B cell (primary cell): ENCODE measurements at regions of chr1 and their contacts with region 1.

Region 1: DNA sequence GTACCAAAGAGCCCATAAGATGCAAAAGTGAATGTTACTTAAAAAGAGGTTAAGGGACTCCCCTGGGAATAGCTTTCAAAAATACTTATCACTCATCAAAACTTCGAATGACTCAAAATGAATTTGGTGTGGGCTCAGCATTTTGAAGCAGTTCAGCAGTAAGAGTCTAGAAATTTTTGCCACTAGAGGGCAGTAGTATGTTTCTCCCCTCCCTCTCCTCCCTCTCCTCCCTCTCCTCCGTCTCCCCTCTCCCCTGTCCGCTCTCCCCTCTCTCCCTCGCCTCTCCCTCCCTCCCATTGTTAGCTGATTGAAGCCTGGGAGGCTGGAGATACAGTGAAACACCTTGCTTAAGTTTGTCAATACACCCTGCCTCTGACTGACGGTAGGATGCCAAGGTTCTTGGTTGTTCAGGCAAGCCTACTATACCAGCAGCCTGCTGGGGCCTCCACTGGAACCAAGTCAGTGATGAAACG is 70.8 kb upstream of the TENT5C start:
- DNase-seq: peak; percentile 84
- ATAC-seq: peak; percentile 85
- H3K4me3 ChIP-seq: no peak overlapping the region
- H3K4me3 Mint-ChIP-seq: peak overlapping the region; percentile 27
- H3K27ac ChIP-seq: no peak overlapping the region
- H3K27ac Mint-ChIP-seq: peak overlapping the region; percentile 54
- H3K4me1 ChIP-seq: peaks cover 28 to 36% of the 10 kb centered on the region in 2 donors
- H3K4me1 Mint-ChIP-seq: peaks cover 2% of the 10 kb centered on the region
- H3K27me3 ChIP-seq: no peaks in the 10 kb centered on the region
- H3K27me3 Mint-ChIP-seq: no peaks in the 10 kb centered on the region
- CTCF ChIP-seq: peak; percentile 77

Region 2: DNA sequence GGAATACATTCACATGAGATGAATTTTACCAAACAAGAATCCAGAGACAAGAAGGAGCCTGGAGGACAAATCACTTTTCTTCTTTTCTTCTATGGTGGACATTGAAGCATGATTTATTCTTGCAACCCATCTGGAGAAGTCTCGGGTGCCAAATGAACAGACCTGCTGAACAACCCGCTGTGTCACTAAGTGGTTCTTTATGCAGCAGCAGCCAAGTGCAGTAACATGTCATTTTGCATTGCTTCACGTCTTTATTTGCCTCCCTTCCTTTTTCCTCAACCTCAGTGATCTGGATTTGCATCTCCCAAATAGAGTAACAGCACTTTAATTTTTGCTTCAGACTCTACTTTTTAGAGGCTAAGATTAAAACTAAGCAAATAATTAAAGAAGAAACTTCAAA is 20.8 kb after region 1 on chr1:
- CTCF ChIA-PET with region 1: interaction called, 12 read pairs
- POLR2A ChIA-PET with region 1: no interaction called
- intact Hi-C with region 1: no loop called
- DNase-seq: no peak
- ATAC-seq: no peak
- H3K4me3 ChIP-seq: no peak overlapping the region
- H3K4me3 Mint-ChIP-seq: no peak overlapping the region
- H3K27ac ChIP-seq: no peak overlapping the region
- H3K27ac Mint-ChIP-seq: no peak overlapping the region
- H3K4me1 ChIP-seq: peaks cover 0 to 3% of the 10 kb centered on the region in 2 donors
- H3K4me1 Mint-ChIP-seq: peaks cover 6% of the 10 kb centered on the region
- H3K27me3 ChIP-seq: no peaks in the 10 kb centered on the region
- H3K27me3 Mint-ChIP-seq: no peaks in the 10 kb centered on the region
- CTCF ChIP-seq: no peak

Region 3: GRCh38 chr1:117594261-117594990 is 59.4 kb after region 1 on chr1:
- CTCF ChIA-PET with region 1: interaction called, 18 read pairs
- POLR2A ChIA-PET with region 1: no interaction called
- intact Hi-C with region 1: no loop called
- DNase-seq: no peak
- ATAC-seq: no peak
- H3K4me3 ChIP-seq: no peak overlapping the region
- H3K4me3 Mint-ChIP-seq: no peak overlapping the region
- H3K27ac ChIP-seq: no peak overlapping the region
- H3K27ac Mint-ChIP-seq: peak overlapping the region; percentile 46
- H3K4me1 ChIP-seq: peaks cover 16 to 26% of the 10 kb centered on the region in 2 donors
- H3K4me1 Mint-ChIP-seq: peaks cover 22% of the 10 kb centered on the region
- H3K27me3 ChIP-seq: no peaks in the 10 kb centered on the region
- H3K27me3 Mint-ChIP-seq: peaks cover 6% of the 10 kb centered on the region
- CTCF ChIP-seq: no peak

Region 4: GRCh38 chr1:117612517-117613248 is 77.7 kb after region 1 on chr1:
- CTCF ChIA-PET with region 1: interaction called, 38 read pairs
- POLR2A ChIA-PET with region 1: no interaction called
- intact Hi-C with region 1: no loop called
- DNase-seq: peak; percentile 56
- ATAC-seq: peak; percentile 31
- H3K4me3 ChIP-seq: peak overlapping the region in 1 of 5 experiments; percentile 23
- H3K4me3 Mint-ChIP-seq: peak overlapping the region; percentile 84
- H3K27ac ChIP-seq: peak overlapping the region; percentile 0 to 52
- H3K27ac Mint-ChIP-seq: peak overlapping the region; percentile 84
- H3K4me1 ChIP-seq: peaks cover 93 to 100% of the 10 kb centered on the region in 2 donors
- H3K4me1 Mint-ChIP-seq: peaks cover 95% of the 10 kb centered on the region
- H3K27me3 ChIP-seq: no peaks in the 10 kb centered on the region
- H3K27me3 Mint-ChIP-seq: no peaks in the 10 kb centered on the region
- CTCF ChIP-seq: no peak

Region 5: DNA sequence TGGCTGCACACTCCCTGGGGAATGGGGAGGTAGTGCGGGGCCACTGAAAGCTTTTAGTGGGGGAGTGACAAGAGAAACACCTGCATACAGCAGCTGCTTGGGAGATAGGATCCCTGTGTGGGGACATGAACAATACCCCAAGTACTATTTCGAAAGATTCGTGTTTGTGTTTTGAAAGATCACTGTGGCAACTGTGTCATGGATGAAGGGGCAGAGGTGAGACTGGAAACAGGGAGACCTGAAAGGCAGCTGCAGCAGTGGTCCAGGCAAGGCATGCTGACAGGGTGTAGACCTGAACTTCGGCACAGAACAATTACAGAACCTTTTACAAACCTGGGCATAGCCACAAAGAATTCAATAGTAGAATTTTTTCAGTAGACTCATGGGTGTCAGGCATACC is 103.7 kb after region 1 on chr1:
- CTCF ChIA-PET with region 1: interaction called, 15 read pairs
- POLR2A ChIA-PET with region 1: no interaction called
- intact Hi-C with region 1: no loop called
- DNase-seq: no peak
- ATAC-seq: no peak
- H3K4me3 ChIP-seq: no peak overlapping the region
- H3K4me3 Mint-ChIP-seq: no peak overlapping the region
- H3K27ac ChIP-seq: no peak overlapping the region
- H3K27ac Mint-ChIP-seq: no peak overlapping the region
- H3K4me1 ChIP-seq: peaks cover 67 to 68% of the 10 kb centered on the region in 2 donors
- H3K4me1 Mint-ChIP-seq: peaks cover 56% of the 10 kb centered on the region
- H3K27me3 ChIP-seq: no peaks in the 10 kb centered on the region
- H3K27me3 Mint-ChIP-seq: no peaks in the 10 kb centered on the region
- CTCF ChIP-seq: no peak

Region 6: GRCh38 chr1:117895482-117896114 is 360.6 kb after region 1 on chr1:
- CTCF ChIA-PET with region 1: interaction called, 30 read pairs
- POLR2A ChIA-PET with region 1: no interaction called
- intact Hi-C with region 1: no loop called
- DNase-seq: peak; percentile 66
- ATAC-seq: no peak
- H3K4me3 ChIP-seq: no peak overlapping the region
- H3K4me3 Mint-ChIP-seq: no peak overlapping the region
- H3K27ac ChIP-seq: no peak overlapping the region
- H3K27ac Mint-ChIP-seq: no peak overlapping the region
- H3K4me1 ChIP-seq: no peaks in the 10 kb centered on the region
- H3K4me1 Mint-ChIP-seq: peaks cover 2% of the 10 kb centered on the region
- H3K27me3 ChIP-seq: no peaks in the 10 kb centered on the region
- H3K27me3 Mint-ChIP-seq: no peaks in the 10 kb centered on the region
- CTCF ChIP-seq: peak; percentile 97